ENCODE measurements at regions of chr19 and their contacts with region 1.

Region 1: GRCh38 chr19:29761575-29762232 is 46.6 kb upstream of the C19orf12 start:
- H3K4me3 ChIP-seq: no peak overlapping the region
- H3K27ac ChIP-seq: no peak overlapping the region
- H3K4me1 ChIP-seq: no peaks in the 10 kb centered on the region
- CTCF ChIP-seq: no peak

Region 2: DNA sequence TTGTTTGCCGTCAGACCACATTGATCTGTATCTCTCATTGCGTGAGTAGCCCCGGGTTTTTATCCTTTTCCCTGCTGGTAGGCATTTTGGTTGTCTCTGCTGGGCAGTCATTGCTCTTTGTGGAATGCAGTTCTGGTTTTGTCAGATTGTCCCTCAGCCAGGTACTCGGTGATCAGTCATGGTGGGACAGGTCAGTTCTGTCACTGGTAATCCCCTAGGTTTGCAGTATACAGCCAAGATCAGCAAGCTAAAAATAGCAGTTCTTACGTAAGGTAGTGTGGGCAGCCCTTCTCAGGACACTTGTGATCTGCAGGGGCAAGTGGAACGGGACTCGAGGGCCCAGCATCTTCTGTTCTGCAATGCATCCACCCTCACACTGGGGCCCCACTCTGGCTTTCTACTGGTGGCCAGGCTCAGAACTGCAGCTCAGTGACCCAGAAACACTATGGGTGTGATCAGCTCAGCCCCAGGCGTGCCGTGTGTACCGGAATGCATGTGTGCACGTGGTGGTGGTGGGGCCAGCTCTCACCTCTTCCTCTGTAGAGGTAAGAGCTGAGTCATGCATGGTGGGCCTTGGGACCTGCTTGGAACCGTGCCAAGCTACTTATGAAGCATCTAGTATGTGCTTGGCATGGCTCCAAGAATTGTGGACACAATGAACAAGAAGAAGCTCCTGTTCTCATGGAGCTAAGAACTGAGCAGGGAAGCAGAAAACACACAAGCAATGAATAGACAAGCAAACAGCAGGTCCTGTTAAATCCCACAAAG is 90.1 kb before region 1 on chr19:
- CTCF ChIA-PET with region 1: no interaction called
- POLR2A ChIA-PET with region 1: no interaction called
- H3K4me3 ChIP-seq: no peak overlapping the region
- H3K27ac ChIP-seq: peak overlapping the region; percentile 32
- H3K4me1 ChIP-seq: peaks cover 27% of the 10 kb centered on the region
- CTCF ChIP-seq: no peak

Region 3: DNA sequence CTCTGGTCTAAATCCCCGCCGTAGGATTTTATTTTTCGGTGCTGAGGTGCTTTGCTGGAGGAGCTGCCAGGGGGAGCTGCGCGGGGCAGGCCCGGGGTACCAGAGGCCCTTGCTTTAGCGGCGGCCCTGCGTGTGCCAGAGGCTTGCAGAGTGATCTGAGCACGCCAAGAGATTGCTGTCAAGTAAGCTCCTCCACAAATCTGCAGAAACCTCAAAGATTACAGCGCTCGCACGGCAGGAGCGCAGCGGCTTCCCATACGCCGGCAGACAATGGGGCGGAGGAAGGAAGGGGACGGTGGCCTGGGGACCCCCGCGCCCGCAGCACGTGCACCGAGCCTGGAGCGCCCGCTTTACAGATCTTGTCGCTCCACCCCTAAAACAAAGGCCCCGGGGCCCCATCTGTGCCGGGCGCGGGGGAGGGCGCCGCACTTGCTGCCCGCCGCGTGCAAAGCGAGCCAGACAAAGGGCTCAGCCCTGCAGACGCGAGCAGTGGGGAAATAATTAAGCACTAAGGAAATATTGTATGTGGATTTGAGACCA is 37.5 kb before region 1 on chr19:
- CTCF ChIA-PET with region 1: interaction called, 21 read pairs
- POLR2A ChIA-PET with region 1: no interaction called
- H3K4me3 ChIP-seq: no peak overlapping the region
- H3K27ac ChIP-seq: no peak overlapping the region
- H3K4me1 ChIP-seq: no peaks in the 10 kb centered on the region; the same call in 1 of the 2 replicates
- CTCF ChIP-seq: no peak

Region 4: DNA sequence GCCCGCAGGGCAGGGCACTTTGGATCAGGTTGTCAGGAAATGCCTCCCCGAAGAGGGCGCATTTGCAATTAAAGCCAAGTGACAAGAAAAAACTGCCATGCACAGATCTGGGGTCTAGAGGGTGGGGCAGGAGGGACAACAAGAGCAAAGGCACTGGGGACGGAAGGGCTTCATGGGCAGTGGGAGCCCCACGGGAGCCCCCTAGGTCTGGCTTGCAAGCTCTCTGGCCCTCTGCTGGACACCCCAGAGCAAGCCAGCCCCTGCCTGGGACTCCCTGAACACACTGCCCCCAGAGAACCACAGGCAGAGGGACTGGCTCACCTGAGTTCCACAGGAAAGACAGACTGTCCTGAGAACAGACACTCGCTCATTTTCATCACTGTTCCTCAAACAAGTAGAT is 16.5 kb before region 1 on chr19:
- CTCF ChIA-PET with region 1: interaction called, 62 read pairs
- POLR2A ChIA-PET with region 1: no interaction called
- H3K4me3 ChIP-seq: no peak overlapping the region
- H3K27ac ChIP-seq: no peak overlapping the region
- H3K4me1 ChIP-seq: 0 out of 2 replicates have a peak, but pooled peaks cover 3% of the 10 kb centered on the region
- CTCF ChIP-seq: peak; percentile 92

Region 5: DNA sequence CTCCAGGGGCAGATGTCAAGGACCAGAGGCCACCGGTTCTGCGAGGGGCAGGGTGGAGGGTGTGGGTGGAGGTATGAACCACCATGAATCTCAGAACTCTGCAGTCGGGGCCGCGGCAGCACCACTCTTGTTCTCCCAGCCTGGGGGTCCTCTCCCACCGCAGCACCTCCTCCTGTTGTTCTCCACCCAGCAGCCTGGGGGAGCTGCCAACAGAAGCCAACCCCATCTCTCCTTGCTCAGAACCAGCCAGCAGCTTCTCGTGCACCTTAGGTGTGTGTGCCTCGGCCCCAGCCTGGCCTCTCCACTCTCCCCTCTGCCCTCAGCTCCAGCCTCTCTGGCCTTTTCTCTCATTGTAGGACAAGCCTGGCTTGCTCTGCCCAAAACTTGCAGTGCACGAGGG is 18.2 kb after region 1 on chr19:
- CTCF ChIA-PET with region 1: interaction called, 138 read pairs
- POLR2A ChIA-PET with region 1: no interaction called
- H3K4me3 ChIP-seq: no peak overlapping the region
- H3K27ac ChIP-seq: no peak overlapping the region
- H3K4me1 ChIP-seq: no peaks in the 10 kb centered on the region
- CTCF ChIP-seq: peak; percentile 50; the same call in 1 of the 2 replicates

Region 6: GRCh38 chr19:29811125-29812079 is 49.7 kb after region 1 on chr19 and contains the start of gene CCNE1:
- CTCF ChIA-PET with region 1: interaction called, 11 read pairs
- POLR2A ChIA-PET with region 1: no interaction called
- H3K4me3 ChIP-seq: peak within 1 kb of the TSS; percentile 47
- H3K27ac ChIP-seq: peak within 1 kb of the TSS; percentile 93
- H3K4me1 ChIP-seq: peaks cover 11% of the 10 kb centered on the region
- CTCF ChIP-seq: no peak

Region 7: GRCh38 chr19:29873024-29873800 is 111.5 kb after region 1 on chr19:
- CTCF ChIA-PET with region 1: interaction called, 14 read pairs
- POLR2A ChIA-PET with region 1: no interaction called
- H3K4me3 ChIP-seq: peak overlapping the region; percentile 47
- H3K27ac ChIP-seq: peak overlapping the region; percentile 76; the same call in 1 of the 2 replicates
- H3K4me1 ChIP-seq: peaks cover 12% of the 10 kb centered on the region
- CTCF ChIP-seq: peak; percentile 86

Region 8: DNA sequence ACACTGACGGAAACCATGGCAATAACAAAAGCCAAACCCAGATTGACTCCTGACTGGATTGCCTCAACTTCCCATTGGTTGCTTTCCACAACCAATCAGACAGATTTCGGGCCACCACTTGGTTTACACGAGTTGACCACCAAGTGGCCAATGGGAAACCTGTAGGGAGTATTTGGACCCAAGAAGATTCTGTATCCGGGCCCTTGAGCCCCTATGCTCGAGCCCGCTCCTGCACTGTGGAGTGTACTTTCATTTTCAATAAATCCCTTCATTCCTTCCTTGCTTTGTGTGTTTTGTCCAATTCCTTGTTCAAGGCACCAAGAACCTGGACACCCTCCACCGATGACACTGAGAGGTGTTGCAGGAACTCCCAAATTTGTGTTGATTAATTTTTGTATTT is 156.2 kb after region 1 on chr19:
- CTCF ChIA-PET with region 1: no interaction called
- POLR2A ChIA-PET with region 1: no interaction called
- H3K4me3 ChIP-seq: no peak overlapping the region
- H3K27ac ChIP-seq: no peak overlapping the region
- H3K4me1 ChIP-seq: no peaks in the 10 kb centered on the region
- CTCF ChIP-seq: no peak

Measured in HEK293 (cell line).